CD8-positive, alpha-beta memory T cell (primary cell): ENCODE measurements at regions of chr17 and their contacts with region 1.

Region 1: GRCh38 chr17:44293509-44294226 is 14.7 kb upstream of the RUNDC3A start:
- DNase-seq: no peak
- H3K4me3 ChIP-seq: no peak overlapping the region
- H3K4me3 Mint-ChIP-seq: no peak overlapping the region
- H3K27ac ChIP-seq: no peak overlapping the region
- H3K27ac Mint-ChIP-seq: no peak overlapping the region
- H3K4me1 ChIP-seq: no peaks in the 10 kb centered on the region
- H3K4me1 Mint-ChIP-seq: no peaks in the 10 kb centered on the region
- H3K27me3 ChIP-seq: no peaks in the 10 kb centered on the region
- H3K27me3 Mint-ChIP-seq: peaks cover 9 to 28% of the 10 kb centered on the region in 2 donors

Region 2: GRCh38 chr17:42848093-42848492 is 1445.6 kb before region 1 on chr17:
- CTCF ChIA-PET with region 1: no interaction called
- POLR2A ChIA-PET with region 1: interaction called, 19 read pairs
- DNase-seq: no peak
- H3K4me3 ChIP-seq: no peak overlapping the region
- H3K4me3 Mint-ChIP-seq: no peak overlapping the region
- H3K27ac ChIP-seq: no peak overlapping the region
- H3K27ac Mint-ChIP-seq: no peak overlapping the region
- H3K4me1 ChIP-seq: no peaks in the 10 kb centered on the region
- H3K4me1 Mint-ChIP-seq: peaks cover 0 to 8% (median 6%) of the 10 kb centered on the region in 3 donors
- H3K27me3 ChIP-seq: no peaks in the 10 kb centered on the region
- H3K27me3 Mint-ChIP-seq: peaks cover 3% of the 10 kb centered on the region in 2 donors

Region 3: DNA sequence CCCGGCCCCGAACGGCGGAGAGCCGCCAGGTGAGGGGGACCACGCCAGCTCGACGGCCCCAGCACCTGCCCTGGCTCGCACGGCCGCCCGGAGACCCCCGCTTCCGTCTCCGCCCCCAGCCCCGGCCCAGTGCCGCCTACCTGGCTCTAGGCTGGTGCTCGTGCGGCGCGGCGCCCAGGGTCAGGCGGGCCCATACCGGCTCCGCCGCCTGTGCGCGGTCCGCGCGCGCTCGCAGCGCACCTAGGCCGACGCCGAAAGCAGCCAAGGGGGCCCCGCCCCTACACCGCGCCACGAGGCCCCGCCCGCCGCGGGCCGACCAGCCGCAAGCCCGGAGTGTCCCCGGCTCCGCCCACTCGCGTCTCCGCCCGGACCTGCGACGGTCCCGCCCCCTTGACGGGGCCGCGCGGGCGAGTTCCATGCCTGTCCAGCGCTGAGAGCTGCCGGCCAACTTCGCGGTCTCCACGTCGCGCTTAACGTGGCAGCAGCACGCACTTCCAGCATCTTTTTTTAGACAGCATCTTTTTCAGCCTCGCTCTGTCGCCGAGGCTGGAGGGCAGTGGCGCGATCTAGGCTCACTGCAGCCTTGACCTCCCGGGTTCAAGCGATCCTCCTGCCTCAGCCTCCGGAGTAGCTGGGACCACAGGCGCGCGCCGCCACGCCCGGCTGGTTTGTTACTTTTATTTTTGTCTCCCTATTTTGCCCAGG is 31.1 kb after region 1 on chr17 and contains the start of gene SLC25A39:
- CTCF ChIA-PET with region 1: no interaction called
- POLR2A ChIA-PET with region 1: no interaction called
- DNase-seq: peak; percentile 92 to 96 (median 94)
- H3K4me3 ChIP-seq: peak within 1 kb of the TSS; percentile 94
- H3K4me3 Mint-ChIP-seq: peak within 1 kb of the TSS; percentile 91 to 98 (median 92)
- H3K27ac ChIP-seq: peak within 1 kb of the TSS; percentile 93
- H3K27ac Mint-ChIP-seq: peak within 1 kb of the TSS; percentile 92 to 99 (median 97)
- H3K4me1 ChIP-seq: peaks cover 21% of the 10 kb centered on the region
- H3K4me1 Mint-ChIP-seq: peaks cover 26 to 31% (median 30%) of the 10 kb centered on the region in 3 donors
- H3K27me3 ChIP-seq: no peaks in the 10 kb centered on the region
- H3K27me3 Mint-ChIP-seq: peaks cover 0 to 2% of the 10 kb centered on the region in 2 donors
- total RNA-seq, gene SLC25A39: 159 to 174 TPM